Activated naive CD4-positive, alpha-beta T cell treated with anti-CD3 and anti-CD28 coated beads for 36 hours (primary cell): ENCODE measurements at regions of chr1 and their contacts with region 1.

Region 1: GRCh38 chr1:221741711-221742554 is at the start of gene DUSP10:
- DNase-seq: peak; percentile 99
- H3K4me3 Mint-ChIP-seq: no peak within 1 kb of the TSS
- H3K27ac Mint-ChIP-seq: peak within 1 kb of the TSS; percentile 48
- H3K4me1 Mint-ChIP-seq: peaks cover 33% of the 10 kb centered on the region
- H3K27me3 Mint-ChIP-seq: no peaks in the 10 kb centered on the region
- total RNA-seq, gene DUSP10: 9.1 TPM

Region 2: DNA sequence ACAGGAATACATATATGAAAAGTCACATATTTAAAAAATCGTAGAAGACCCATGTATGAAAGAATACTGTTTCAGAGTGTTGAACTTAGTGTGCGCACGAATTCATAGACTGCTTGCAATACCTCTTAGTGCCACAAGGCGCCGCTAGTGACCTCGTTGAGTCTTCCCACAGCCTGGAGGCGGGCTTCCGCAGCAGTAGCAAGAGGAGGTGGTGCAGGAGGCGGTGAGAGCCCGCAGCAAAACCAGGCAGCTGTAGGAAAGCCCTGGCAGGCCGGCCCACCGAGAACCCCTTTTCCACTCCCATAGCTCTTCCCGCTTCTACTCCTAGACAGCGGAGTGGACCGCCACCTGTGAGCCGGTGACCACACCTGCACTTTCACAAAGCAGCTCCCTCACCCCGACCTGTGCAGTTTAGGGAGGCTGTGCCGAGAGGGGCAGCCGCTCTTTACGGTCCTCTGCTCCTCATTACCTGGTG is 931.7 kb before region 1 on chr1:
- CTCF ChIA-PET with region 1: no interaction called
- intact Hi-C with region 1: loop called (anchors 10 kb)
- DNase-seq: peak; percentile 81
- H3K4me3 Mint-ChIP-seq: peak overlapping the region; percentile 22
- H3K27ac Mint-ChIP-seq: no peak overlapping the region
- H3K4me1 Mint-ChIP-seq: peaks cover 3% of the 10 kb centered on the region
- H3K27me3 Mint-ChIP-seq: peaks cover 21% of the 10 kb centered on the region

Region 3: DNA sequence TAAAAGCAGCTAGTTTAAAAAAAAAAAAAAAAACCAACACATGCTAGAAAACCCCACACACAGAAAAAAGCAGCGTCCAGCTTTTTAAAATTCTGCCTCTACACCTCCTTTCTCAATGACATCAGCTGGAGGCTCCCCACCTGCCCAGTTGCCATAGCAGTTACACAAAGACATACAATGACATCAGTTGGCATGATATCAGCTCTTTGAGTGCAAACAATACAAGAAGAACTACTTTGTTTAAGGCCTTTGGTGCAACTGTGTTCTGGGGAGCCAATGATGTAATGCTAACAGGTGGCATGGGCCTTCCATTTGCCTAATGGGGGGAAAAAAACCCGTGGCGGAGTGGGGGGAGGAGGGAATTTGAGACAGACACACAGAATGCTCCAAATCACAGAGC is 32.9 kb before region 1 on chr1:
- CTCF ChIA-PET with region 1: interaction called, 8 read pairs
- intact Hi-C with region 1: loop called (anchors 1 kb)
- DNase-seq: peak; percentile 42
- H3K4me3 Mint-ChIP-seq: no peak overlapping the region
- H3K27ac Mint-ChIP-seq: no peak overlapping the region
- H3K4me1 Mint-ChIP-seq: peaks cover 53% of the 10 kb centered on the region
- H3K27me3 Mint-ChIP-seq: no peaks in the 10 kb centered on the region

Region 4: DNA sequence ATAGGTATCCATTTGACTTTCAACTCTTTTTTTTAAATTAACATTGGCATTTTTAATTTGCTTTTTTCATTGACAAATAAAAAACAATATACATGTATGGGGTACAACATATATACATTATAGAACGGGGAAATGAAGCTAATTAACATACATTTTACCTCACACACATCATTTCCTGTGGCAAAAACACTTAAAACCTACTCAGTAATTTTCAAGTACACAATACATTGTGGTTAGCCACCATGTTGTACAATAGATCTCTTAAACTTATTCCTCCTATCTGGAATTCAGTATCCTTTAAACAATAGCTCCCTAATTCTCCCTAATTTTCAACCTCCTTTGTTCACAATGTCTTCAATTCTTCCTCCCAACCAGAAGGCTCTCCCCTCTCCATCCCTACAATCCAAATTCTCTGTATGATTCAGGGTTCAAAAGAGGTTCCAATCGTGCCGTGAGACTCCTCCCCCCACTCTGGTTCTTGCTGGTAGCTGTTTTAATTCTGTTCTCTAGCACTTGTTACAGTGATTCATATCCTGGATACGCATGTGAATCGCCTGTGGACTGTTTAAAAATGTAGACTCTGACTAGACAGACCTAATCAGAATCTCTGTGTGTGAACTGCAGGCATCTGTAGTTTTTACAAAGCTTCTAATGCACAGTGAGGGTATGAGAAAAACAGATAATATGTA is 87.5 kb after region 1 on chr1:
- CTCF ChIA-PET with region 1: interaction called, 3 read pairs
- intact Hi-C with region 1: loop called (anchors 1 kb)
- DNase-seq: peak; percentile 83
- H3K4me3 Mint-ChIP-seq: peak overlapping the region; percentile 14
- H3K27ac Mint-ChIP-seq: peak overlapping the region; percentile 83
- H3K4me1 Mint-ChIP-seq: peaks cover 45% of the 10 kb centered on the region
- H3K27me3 Mint-ChIP-seq: no peaks in the 10 kb centered on the region

Region 5: DNA sequence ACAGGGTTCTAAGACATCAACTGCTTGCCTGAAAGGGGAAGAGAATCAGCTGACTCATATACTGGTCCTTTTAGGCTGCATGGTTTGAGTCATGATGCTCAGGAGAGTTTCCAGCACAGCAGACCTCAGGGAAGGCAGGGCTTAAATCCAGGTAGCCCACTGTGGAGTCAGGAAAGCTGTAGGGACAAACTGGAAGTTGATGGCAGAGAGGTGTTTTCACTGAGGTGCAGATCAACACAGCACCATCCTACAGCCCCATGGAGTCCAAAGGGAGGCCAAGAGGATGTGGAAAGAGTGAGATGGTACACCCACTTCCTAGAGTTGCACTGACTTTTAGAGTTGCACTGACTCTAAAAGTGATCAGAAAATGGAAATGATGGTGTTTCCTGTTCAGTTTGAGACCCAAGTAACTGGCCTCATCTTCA is 252.4 kb after region 1 on chr1:
- CTCF ChIA-PET with region 1: interaction called, 3 read pairs
- intact Hi-C with region 1: loop called (anchors 1 kb)
- DNase-seq: peak; percentile 55
- H3K4me3 Mint-ChIP-seq: no peak overlapping the region
- H3K27ac Mint-ChIP-seq: peak overlapping the region; percentile 94
- H3K4me1 Mint-ChIP-seq: peaks cover 33% of the 10 kb centered on the region
- H3K27me3 Mint-ChIP-seq: no peaks in the 10 kb centered on the region

Region 6: GRCh38 chr1:222455188-222455879 is 713.4 kb after region 1 on chr1:
- CTCF ChIA-PET with region 1: interaction called, 6 read pairs
- intact Hi-C with region 1: loop called (anchors 1 kb)
- DNase-seq: peak; percentile 92
- H3K4me3 Mint-ChIP-seq: no peak overlapping the region
- H3K27ac Mint-ChIP-seq: no peak overlapping the region
- H3K4me1 Mint-ChIP-seq: peaks cover 18% of the 10 kb centered on the region
- H3K27me3 Mint-ChIP-seq: no peaks in the 10 kb centered on the region